ENCODE measurements at regions of chr1 and their contacts with region 1.

Region 1: GRCh38 chr1:245516284-245516759 is 361.5 kb downstream of the KIF26B start:
- DNase-seq: no peak
- ATAC-seq: no peak; the same call in 1 of the 2 replicates
- H3K4me3 ChIP-seq: no peak overlapping the region
- H3K27ac ChIP-seq: no peak overlapping the region
- H3K4me1 ChIP-seq: no peaks in the 10 kb centered on the region
- H3K27me3 ChIP-seq: peaks cover 13% of the 10 kb centered on the region
- CTCF ChIP-seq: peak in 2 of 3 experiments; percentile 17 to 36; a peak in 3 of 6 replicates
- POLR2A ChIP-seq: no peak
- RAD21 ChIP-seq: no peak

Region 2: GRCh38 chr1:245500546-245500945 is 15.8 kb before region 1 on chr1:
- CTCF ChIA-PET with region 1: no interaction called
- POLR2A ChIA-PET with region 1: no interaction called
- RAD21 ChIA-PET with region 1: no interaction called
- intact Hi-C with region 1: loop called (anchors 1 kb)
- DNase-seq: no peak
- ATAC-seq: no peak
- H3K4me3 ChIP-seq: no peak overlapping the region
- H3K27ac ChIP-seq: no peak overlapping the region
- H3K4me1 ChIP-seq: no peaks in the 10 kb centered on the region; a peak in 1 of 4 replicates
- H3K27me3 ChIP-seq: no peaks in the 10 kb centered on the region
- CTCF ChIP-seq: no peak
- POLR2A ChIP-seq: no peak
- RAD21 ChIP-seq: no peak

Measured in HCT116 (cell line).